Dorsolateral prefrontal cortex (tissue), 120 donors: ENCODE measurements at regions of chr22 and their contacts with region 1.

Region 1: DNA sequence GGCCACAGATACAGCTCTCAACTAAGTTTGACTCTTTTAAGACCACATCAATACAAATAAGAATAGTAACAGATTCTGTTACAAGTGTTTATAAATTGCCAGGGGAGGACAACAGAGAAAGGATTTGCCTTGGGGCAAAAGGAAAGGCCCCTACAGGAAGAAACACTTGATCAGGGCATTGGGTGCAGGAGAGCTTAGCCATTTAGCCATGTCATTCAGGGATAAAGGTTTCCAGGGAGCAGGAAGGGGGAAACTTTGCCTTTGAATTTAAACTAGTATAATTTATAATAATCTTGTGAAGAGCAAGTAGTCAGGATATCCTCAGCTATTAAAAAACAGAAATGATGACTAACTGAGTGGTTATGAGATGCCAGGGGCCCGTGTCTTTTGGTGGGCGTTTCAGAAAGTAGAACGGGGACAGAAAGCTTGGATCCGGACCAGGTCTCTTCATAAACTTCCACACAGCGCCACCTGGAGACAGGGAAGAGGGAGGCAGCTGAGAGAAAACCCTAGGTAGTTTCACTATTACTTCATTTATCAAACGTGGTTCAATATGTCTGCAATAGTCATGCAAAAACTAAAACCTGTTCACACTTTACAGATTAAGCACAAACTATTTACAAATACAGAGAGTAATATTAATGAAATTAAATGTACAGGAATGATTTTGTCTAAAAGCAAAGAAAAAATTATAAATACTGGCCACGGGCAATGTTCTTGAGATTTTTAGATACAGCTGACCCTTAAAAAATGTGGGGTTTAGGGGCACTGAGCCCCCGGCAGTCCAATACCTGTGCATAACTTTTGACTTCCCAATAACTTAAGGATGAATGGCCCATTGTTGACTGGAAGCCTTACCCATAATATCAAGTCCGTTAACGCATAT is 11.0 kb upstream of the SLC5A4 start:
- DNase-seq: peak; percentile 42 to 75 (median 70)
- H3K4me3 ChIP-seq: peak overlapping the region in 15 of 59 donors; percentile 6 to 42 (median 30)
- H3K27ac ChIP-seq: peak overlapping the region in 4 of 59 donors; percentile 13 to 50 (median 27)
- H3K27me3 ChIP-seq: no peaks in the 10 kb centered on the region
- CTCF ChIP-seq: peak; percentile 68 to 93 (median 85)

Region 2: GRCh38 chr22:31977141-31977841 is 288.8 kb before region 1 on chr22:
- intact Hi-C with region 1: loop called (anchors 5 to 10 kb)
- DNase-seq: peak in 9 of 10 donors; percentile 28 to 80 (median 66)
- H3K4me3 ChIP-seq: no peak overlapping the region
- H3K27ac ChIP-seq: no peak overlapping the region
- H3K27me3 ChIP-seq: no peaks in the 10 kb centered on the region
- CTCF ChIP-seq: peak in 54 of 56 donors; percentile 42 to 75 (median 64)

Region 3: GRCh38 chr22:32103658-32104315 is 162.3 kb before region 1 on chr22:
- intact Hi-C with region 1: loop called (anchors 10 kb)
- DNase-seq: no peak
- H3K4me3 ChIP-seq: no peak overlapping the region
- H3K27ac ChIP-seq: no peak overlapping the region
- H3K27me3 ChIP-seq: peaks cover 0 to 10% (median 0%) of the 10 kb centered on the region in 45 donors
- CTCF ChIP-seq: peak in 52 of 56 donors; percentile 25 to 73 (median 50)

Region 4: GRCh38 chr22:32202539-32203180 is 63.5 kb before region 1 on chr22:
- intact Hi-C with region 1: loop called (anchors 5 kb)
- DNase-seq: peak in 6 of 10 donors; percentile 43 to 60 (median 54)
- H3K4me3 ChIP-seq: peak overlapping the region in 58 of 59 donors; percentile 17 to 70 (median 49)
- H3K27ac ChIP-seq: peak overlapping the region in 15 of 59 donors; percentile 13 to 85 (median 51)
- H3K27me3 ChIP-seq: peaks cover 0 to 15% (median 0%) of the 10 kb centered on the region in 45 donors
- CTCF ChIP-seq: peak in 52 of 56 donors; percentile 26 to 61 (median 44)

Region 5: GRCh38 chr22:32823024-32823730 is 557.1 kb after region 1 on chr22:
- intact Hi-C with region 1: no loop called
- DNase-seq: no peak
- H3K4me3 ChIP-seq: no peak overlapping the region
- H3K27ac ChIP-seq: no peak overlapping the region
- H3K27me3 ChIP-seq: no peaks in the 10 kb centered on the region
- CTCF ChIP-seq: peak in 23 of 56 donors; percentile 8 to 36 (median 20)